H1 (cell line): ENCODE measurements at regions of chr2 and their contacts with region 1.

Region 1: DNA sequence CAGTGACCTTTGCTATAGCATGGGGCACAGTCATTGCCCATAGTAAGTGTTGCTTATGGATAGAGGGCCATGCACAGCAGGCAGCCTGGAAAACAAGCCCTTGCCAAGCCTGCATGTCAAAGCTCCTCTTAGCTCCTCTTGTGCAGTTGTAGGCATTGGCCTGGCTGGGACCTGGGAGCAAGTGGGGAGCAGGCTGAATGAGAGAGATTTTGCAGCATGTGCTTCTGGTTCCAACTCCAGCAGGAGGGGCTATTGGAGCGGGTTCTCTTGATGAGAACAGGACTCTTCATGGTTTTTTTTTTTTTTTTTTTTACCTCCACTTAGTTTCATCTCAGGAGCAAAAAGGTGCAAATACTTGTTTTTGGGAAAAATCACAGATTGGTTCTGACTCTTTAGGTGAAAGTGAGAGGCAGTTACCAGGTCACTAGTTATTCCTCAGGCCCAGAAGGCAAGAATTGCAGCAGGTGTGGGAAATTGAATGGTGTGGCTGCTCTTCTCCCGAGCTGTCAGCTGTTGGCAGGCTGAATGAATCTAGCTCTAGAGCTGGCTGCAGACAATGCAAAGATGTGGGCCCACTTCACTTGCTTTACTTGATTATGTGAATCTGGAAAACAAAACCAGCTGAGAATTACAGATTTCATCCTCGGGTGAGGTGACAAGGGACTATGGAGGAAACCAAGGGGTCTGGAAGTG is 95.9 kb downstream of the MAP4K4 start:
- DNase-seq: no peak
- H3K4me3 ChIP-seq: no peak overlapping the region
- H3K27ac ChIP-seq: no peak overlapping the region
- H3K4me1 ChIP-seq: peaks cover 0 to 11% (median 5%) of the 10 kb centered on the region in 4 experiments; a peak in 3 of 7 replicates
- H3K27me3 ChIP-seq: no peaks in the 10 kb centered on the region
- CTCF ChIP-seq: peak; percentile 41 to 56 (median 55)
- EP300 ChIP-seq: no peak
- POLR2A ChIP-seq: no peak
- RAD21 ChIP-seq: peak; percentile 51 to 69

Region 2: DNA sequence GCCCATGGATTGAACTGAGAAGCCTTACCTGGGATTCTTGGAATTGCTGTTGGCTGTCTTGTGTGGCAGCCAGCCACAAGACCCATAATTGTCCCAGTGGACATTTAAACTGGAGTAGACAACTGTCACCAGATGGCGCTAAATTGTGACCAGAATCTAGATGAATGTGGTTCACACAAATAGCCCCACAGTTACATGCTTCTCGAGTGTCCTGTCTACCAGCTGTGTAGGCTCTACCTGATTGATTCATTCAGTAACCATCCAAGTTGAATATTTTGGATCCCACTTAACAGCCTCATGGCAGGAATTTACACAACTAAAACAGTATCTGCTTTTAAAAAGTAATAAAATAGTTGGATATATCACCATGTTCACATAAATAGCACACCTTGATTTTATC is 22.7 kb before region 1 on chr2:
- CTCF ChIA-PET with region 1: interaction called, 13 read pairs
- POLR2A ChIA-PET with region 1: no interaction called
- DNase-seq: no peak
- H3K4me3 ChIP-seq: no peak overlapping the region
- H3K27ac ChIP-seq: no peak overlapping the region
- H3K4me1 ChIP-seq: peaks cover 6 to 40% (median 22%) of the 10 kb centered on the region in 4 experiments; a peak in 4 of 7 replicates
- H3K27me3 ChIP-seq: no peaks in the 10 kb centered on the region
- CTCF ChIP-seq: peak in 2 of 3 experiments; percentile 32 to 33; a peak in 2 of 4 replicates
- EP300 ChIP-seq: no peak
- POLR2A ChIP-seq: no peak
- RAD21 ChIP-seq: peak in 1 of 2 experiments; percentile 24; a peak in 3 of 4 replicates

Region 3: GRCh38 chr2:101776172-101777043 is 17.0 kb before region 1 on chr2:
- CTCF ChIA-PET with region 1: interaction called, 13 read pairs
- POLR2A ChIA-PET with region 1: interaction called, 3 read pairs
- DNase-seq: no peak
- H3K4me3 ChIP-seq: no peak overlapping the region
- H3K27ac ChIP-seq: no peak overlapping the region
- H3K4me1 ChIP-seq: peaks cover 13 to 38% (median 27%) of the 10 kb centered on the region in 4 experiments
- H3K27me3 ChIP-seq: no peaks in the 10 kb centered on the region
- CTCF ChIP-seq: peak; percentile 48 to 59 (median 48)
- EP300 ChIP-seq: no peak
- POLR2A ChIP-seq: no peak
- RAD21 ChIP-seq: no peak; a peak in 2 of 4 replicates

Region 4: DNA sequence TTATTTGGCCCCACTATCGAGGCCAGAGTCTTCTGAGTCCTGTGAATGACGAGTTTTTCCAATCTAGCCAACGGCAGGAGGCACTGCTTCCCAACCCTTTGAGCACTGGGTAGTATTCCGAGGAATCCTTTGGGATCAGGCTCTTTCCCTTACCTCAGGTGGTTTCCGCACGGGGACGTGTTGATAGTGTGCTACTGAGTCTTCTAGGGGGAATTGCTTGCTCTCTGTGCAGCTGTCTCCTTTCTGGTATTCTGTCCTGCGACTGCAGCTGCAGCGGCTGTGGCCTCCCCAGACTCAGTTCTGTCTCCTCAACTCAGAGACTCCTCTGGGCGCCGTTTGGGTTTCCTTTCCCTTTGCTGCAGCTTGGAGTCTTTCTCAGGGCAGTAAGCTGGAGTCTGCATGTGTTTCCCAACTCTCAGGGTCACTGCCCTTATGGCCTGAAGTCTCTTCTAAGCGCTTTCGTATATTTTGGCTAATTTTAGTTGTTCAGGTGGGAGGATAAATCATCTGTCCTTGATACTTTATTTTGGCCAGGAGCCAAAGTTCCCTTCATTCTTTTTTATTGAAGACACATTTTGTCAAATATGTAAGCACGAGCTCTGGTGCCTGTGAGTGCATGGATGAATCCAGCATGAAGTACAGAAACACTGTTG is 22.4 kb after region 1 on chr2:
- CTCF ChIA-PET with region 1: interaction called, 19 read pairs
- POLR2A ChIA-PET with region 1: no interaction called
- DNase-seq: no peak
- H3K4me3 ChIP-seq: no peak overlapping the region
- H3K27ac ChIP-seq: no peak overlapping the region
- H3K4me1 ChIP-seq: peaks cover 0 to 25% (median 7%) of the 10 kb centered on the region in 4 experiments; a peak in 3 of 7 replicates
- H3K27me3 ChIP-seq: no peaks in the 10 kb centered on the region
- CTCF ChIP-seq: peak in 1 of 3 experiments; percentile 18; a peak in 1 of 4 replicates
- EP300 ChIP-seq: no peak
- POLR2A ChIP-seq: no peak
- RAD21 ChIP-seq: 0 out of 4 replicates have a peak, but pooled peaks of 1 of the 2 experiments have one; percentile 7

Region 5: DNA sequence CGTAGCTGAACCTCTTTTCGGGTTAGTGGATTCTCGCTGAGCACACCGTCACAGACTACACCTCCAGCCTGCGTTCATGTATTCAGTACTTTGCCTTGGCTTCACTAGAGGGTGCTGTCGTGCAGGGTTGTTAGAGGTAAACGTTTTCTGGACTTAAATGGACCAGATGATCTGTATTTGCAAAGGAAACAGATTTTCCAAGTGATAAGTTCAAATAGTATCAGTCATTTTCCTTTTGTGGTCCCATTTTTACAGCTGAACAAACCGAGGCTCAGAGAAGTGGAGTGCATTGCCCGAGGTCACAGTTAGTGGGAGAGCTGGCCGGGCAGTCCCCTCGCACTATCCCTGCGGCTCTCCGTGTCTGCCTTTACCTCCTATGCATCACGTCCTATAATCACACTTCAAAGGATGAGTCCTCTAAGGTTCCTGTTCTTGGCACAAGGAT is 29.9 kb after region 1 on chr2:
- CTCF ChIA-PET with region 1: interaction called, 37 read pairs
- POLR2A ChIA-PET with region 1: no interaction called
- DNase-seq: peak in 1 of 2 experiments; percentile 72
- H3K4me3 ChIP-seq: no peak overlapping the region
- H3K27ac ChIP-seq: no peak overlapping the region
- H3K4me1 ChIP-seq: peaks cover 0 to 10% (median 7%) of the 10 kb centered on the region in 4 experiments; a peak in 3 of 7 replicates
- H3K27me3 ChIP-seq: no peaks in the 10 kb centered on the region
- CTCF ChIP-seq: peak; percentile 58 to 86 (median 65)
- EP300 ChIP-seq: no peak
- POLR2A ChIP-seq: no peak
- RAD21 ChIP-seq: peak; percentile 56 to 68

Region 6: DNA sequence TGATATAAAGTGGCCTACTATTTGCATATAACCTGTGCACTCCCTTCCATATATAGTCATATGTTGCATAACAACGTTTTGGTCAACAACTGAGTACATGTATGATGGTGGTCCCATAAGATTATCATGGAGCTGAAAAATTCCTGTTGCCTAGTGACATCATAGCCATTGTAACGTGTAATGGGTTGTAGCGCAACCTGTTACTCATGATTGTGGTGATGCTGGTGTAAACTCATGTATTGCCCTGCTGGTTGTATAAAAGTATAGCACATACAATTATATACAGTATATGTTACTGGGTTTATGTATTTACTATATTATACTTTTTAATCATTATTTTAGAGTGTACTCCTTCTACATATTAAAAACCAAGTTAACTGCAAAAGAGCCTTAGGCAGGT is 53.5 kb after region 1 on chr2:
- CTCF ChIA-PET with region 1: no interaction called
- POLR2A ChIA-PET with region 1: no interaction called
- DNase-seq: no peak
- H3K4me3 ChIP-seq: no peak overlapping the region
- H3K27ac ChIP-seq: no peak overlapping the region
- H3K4me1 ChIP-seq: no peaks in the 10 kb centered on the region
- H3K27me3 ChIP-seq: no peaks in the 10 kb centered on the region
- CTCF ChIP-seq: no peak
- EP300 ChIP-seq: no peak
- POLR2A ChIP-seq: no peak
- RAD21 ChIP-seq: no peak

Region 7: DNA sequence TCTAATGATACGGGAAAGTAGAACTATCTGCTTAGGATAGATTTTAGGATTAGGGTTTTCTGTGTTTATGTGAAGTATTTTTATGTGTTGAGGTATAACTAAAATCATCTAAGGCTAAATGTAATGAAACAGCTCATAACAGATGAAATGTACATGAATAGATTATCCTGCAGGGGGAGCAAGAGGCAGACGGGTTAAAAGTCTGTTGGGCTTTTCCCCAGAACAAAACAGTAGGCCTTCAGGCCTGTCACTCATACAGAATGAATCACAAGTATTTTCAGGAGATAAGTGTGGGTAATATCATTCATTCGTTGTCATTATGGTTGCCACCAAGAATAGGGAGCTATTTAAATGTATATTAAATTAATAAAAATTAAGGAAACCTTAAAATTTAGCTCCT is 90.4 kb after region 1 on chr2:
- CTCF ChIA-PET with region 1: no interaction called
- POLR2A ChIA-PET with region 1: no interaction called
- DNase-seq: no peak
- H3K4me3 ChIP-seq: no peak overlapping the region
- H3K27ac ChIP-seq: no peak overlapping the region
- H3K4me1 ChIP-seq: no peaks in the 10 kb centered on the region
- H3K27me3 ChIP-seq: no peaks in the 10 kb centered on the region
- CTCF ChIP-seq: peak in 2 of 3 experiments; percentile 44 to 57; a peak in 2 of 4 replicates
- EP300 ChIP-seq: no peak
- POLR2A ChIP-seq: no peak
- RAD21 ChIP-seq: peak; percentile 61 to 63